CD4-positive, alpha-beta T cell (primary cell): ENCODE measurements at regions of chr15 and their contacts with region 1.

Region 1: GRCh38 chr15:66386204-66387123 is at the start of gene MAP2K1:
- DNase-seq: peak; percentile 94 to 100 (median 98)
- ATAC-seq: peak; percentile 82
- H3K4me3 ChIP-seq: peak within 1 kb of the TSS; percentile 75
- H3K4me3 Mint-ChIP-seq: peak within 1 kb of the TSS; percentile 99
- H3K27ac ChIP-seq: peak within 1 kb of the TSS; percentile 57 to 66
- H3K27ac Mint-ChIP-seq: peak within 1 kb of the TSS; percentile 96
- H3K4me1 ChIP-seq: peaks cover 46% of the 10 kb centered on the region
- H3K4me1 Mint-ChIP-seq: peaks cover 59% of the 10 kb centered on the region
- H3K27me3 ChIP-seq: no peaks in the 10 kb centered on the region
- H3K27me3 Mint-ChIP-seq: no peaks in the 10 kb centered on the region
- CTCF ChIP-seq: peak; percentile 90
- total RNA-seq, gene MAP2K1: 33.8 to 34.7 TPM

Region 2: GRCh38 chr15:66132251-66132816 is 254.1 kb before region 1 on chr15:
- CTCF ChIA-PET with region 1: no interaction called
- POLR2A ChIA-PET with region 1: no interaction called
- intact Hi-C with region 1: no loop called
- DNase-seq: no peak
- ATAC-seq: no peak
- H3K4me3 ChIP-seq: no peak overlapping the region
- H3K4me3 Mint-ChIP-seq: no peak overlapping the region
- H3K27ac ChIP-seq: no peak overlapping the region
- H3K27ac Mint-ChIP-seq: no peak overlapping the region
- H3K4me1 ChIP-seq: peaks cover 3% of the 10 kb centered on the region
- H3K4me1 Mint-ChIP-seq: peaks cover 13% of the 10 kb centered on the region
- H3K27me3 ChIP-seq: no peaks in the 10 kb centered on the region
- H3K27me3 Mint-ChIP-seq: peaks cover 11% of the 10 kb centered on the region
- CTCF ChIP-seq: no peak

Region 3: GRCh38 chr15:66356345-66357236 is 29.9 kb before region 1 on chr15 and contains the start of gene TIPIN:
- CTCF ChIA-PET with region 1: interaction called, 13 read pairs
- POLR2A ChIA-PET with region 1: interaction called, 19 read pairs
- intact Hi-C with region 1: loop called (anchors 1 kb)
- DNase-seq: peak; percentile 94 to 99 (median 96)
- ATAC-seq: peak; percentile 96
- H3K4me3 ChIP-seq: peak within 1 kb of the TSS; percentile 74
- H3K4me3 Mint-ChIP-seq: peak within 1 kb of the TSS; percentile 89
- H3K27ac ChIP-seq: peak within 1 kb of the TSS; percentile 24 to 56
- H3K27ac Mint-ChIP-seq: peak within 1 kb of the TSS; percentile 81
- H3K4me1 ChIP-seq: peaks cover 20% of the 10 kb centered on the region
- H3K4me1 Mint-ChIP-seq: peaks cover 23% of the 10 kb centered on the region
- H3K27me3 ChIP-seq: no peaks in the 10 kb centered on the region
- H3K27me3 Mint-ChIP-seq: no peaks in the 10 kb centered on the region
- CTCF ChIP-seq: no peak
- total RNA-seq, gene TIPIN: 3.7 to 3.9 TPM

Region 4: GRCh38 chr15:66401130-66402021 is 14.9 kb after region 1 on chr15:
- CTCF ChIA-PET with region 1: interaction called, 34 read pairs
- POLR2A ChIA-PET with region 1: interaction called, 10 read pairs
- intact Hi-C with region 1: loop called in 1 of 2 experiments (anchors 2 kb)
- DNase-seq: peak in 4 of 14 experiments; percentile 27 to 42 (median 32)
- ATAC-seq: peak; percentile 71
- H3K4me3 ChIP-seq: peak overlapping the region; percentile 8
- H3K4me3 Mint-ChIP-seq: peak overlapping the region; percentile 79
- H3K27ac ChIP-seq: no peak overlapping the region
- H3K27ac Mint-ChIP-seq: peak overlapping the region; percentile 79
- H3K4me1 ChIP-seq: peaks cover 49% of the 10 kb centered on the region
- H3K4me1 Mint-ChIP-seq: peaks cover 79% of the 10 kb centered on the region
- H3K27me3 ChIP-seq: no peaks in the 10 kb centered on the region
- H3K27me3 Mint-ChIP-seq: no peaks in the 10 kb centered on the region
- CTCF ChIP-seq: no peak

Region 5: DNA sequence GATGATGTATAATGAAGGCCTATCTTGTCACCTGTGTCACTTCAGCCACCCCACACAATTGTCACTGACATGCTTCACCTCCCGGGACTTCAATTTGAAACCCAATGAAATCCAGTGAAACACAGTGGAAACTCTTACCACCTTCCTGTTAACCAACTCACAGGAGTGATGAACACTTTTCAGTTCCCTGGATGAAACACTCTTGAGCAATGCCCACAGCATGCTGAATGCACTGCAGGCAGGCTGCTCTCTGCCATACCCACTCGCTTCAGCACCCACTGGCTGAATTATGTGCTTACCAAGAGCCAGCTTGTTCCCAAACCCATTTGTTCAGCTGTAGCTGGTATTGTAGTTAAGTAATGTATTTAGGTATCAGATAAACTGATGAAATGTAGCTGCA is 47.3 kb after region 1 on chr15:
- CTCF ChIA-PET with region 1: interaction called, 3 read pairs
- POLR2A ChIA-PET with region 1: no interaction called
- intact Hi-C with region 1: loop called in 1 of 2 experiments (anchors 5 kb)
- DNase-seq: no peak
- ATAC-seq: no peak
- H3K4me3 ChIP-seq: no peak overlapping the region
- H3K4me3 Mint-ChIP-seq: no peak overlapping the region
- H3K27ac ChIP-seq: no peak overlapping the region
- H3K27ac Mint-ChIP-seq: peak overlapping the region; percentile 29
- H3K4me1 ChIP-seq: peaks cover 16% of the 10 kb centered on the region
- H3K4me1 Mint-ChIP-seq: peaks cover 52% of the 10 kb centered on the region
- H3K27me3 ChIP-seq: no peaks in the 10 kb centered on the region
- H3K27me3 Mint-ChIP-seq: no peaks in the 10 kb centered on the region
- CTCF ChIP-seq: no peak

Region 6: DNA sequence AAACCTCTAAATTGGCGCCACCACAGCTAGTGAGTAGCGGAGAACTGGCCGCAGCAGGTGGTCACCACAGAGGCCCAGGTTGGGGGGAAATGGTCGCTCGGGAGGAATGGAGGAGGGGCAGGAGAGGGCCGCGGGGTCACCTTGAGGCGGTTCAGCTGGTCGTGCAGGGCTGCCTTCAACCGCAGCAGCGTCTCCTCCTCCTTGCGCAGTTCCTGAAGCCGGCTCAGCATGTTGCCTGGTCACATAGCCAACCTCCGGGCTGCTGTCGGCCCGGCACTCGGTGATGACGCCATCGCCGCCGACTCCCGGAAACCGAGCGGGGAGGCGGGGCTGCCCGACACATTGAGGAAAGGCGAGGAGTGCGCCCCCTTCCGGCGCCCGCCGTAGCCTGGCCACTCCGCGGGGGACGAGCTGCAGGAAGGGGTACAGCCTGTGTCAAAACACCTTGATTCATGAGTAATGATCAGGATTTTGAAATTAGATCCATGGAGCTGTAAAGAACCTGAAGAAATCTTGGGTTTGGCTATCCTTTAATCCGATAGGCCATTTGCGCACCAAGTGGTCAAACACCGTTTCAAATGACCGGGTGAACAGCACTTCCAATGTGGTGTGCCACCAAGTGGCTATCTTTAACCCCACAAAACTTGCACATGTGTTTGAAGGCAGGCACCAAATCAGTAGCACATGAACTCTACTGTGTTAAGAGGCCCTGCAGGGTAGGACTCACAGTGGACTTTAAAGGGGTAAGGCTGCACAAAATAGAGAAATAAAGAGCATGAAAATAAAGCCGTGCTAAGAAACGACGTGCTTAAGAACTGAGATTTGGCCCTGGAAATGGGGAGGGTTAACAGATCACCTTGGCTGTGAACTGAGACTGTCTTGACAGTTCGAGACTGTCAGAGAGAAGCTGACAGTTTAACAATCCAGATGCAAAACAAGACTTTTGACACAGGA is 111.3 kb after region 1 on chr15 and contains the start of gene SNAPC5:
- CTCF ChIA-PET with region 1: interaction called, 107 read pairs
- POLR2A ChIA-PET with region 1: interaction called, 94 read pairs
- intact Hi-C with region 1: loop called (anchors 1 kb)
- DNase-seq: peak; percentile 95 to 98 (median 97)
- ATAC-seq: peak; percentile 88
- H3K4me3 ChIP-seq: peak within 1 kb of the TSS; percentile 85
- H3K4me3 Mint-ChIP-seq: peak within 1 kb of the TSS; percentile 99
- H3K27ac ChIP-seq: peak within 1 kb of the TSS; percentile 89 to 93
- H3K27ac Mint-ChIP-seq: peak within 1 kb of the TSS; percentile 99
- H3K4me1 ChIP-seq: peaks cover 33% of the 10 kb centered on the region
- H3K4me1 Mint-ChIP-seq: peaks cover 66% of the 10 kb centered on the region
- H3K27me3 ChIP-seq: no peaks in the 10 kb centered on the region
- H3K27me3 Mint-ChIP-seq: no peaks in the 10 kb centered on the region
- CTCF ChIP-seq: peak; percentile 100
- total RNA-seq, gene SNAPC5: 23.8 to 24.1 TPM